HCT116 (cell line): ENCODE measurements at regions of chrX and their contacts with region 1.

Region 1: GRCh38 chrX:55717521-55718497 is at the start of gene RRAGB:
- DNase-seq: peak; percentile 89
- ATAC-seq: peak; percentile 99
- H3K4me3 ChIP-seq: peak within 1 kb of the TSS; percentile 69 to 71
- H3K27ac ChIP-seq: peak within 1 kb of the TSS; percentile 73
- H3K4me1 ChIP-seq: peaks cover 0 to 4% of the 10 kb centered on the region in 2 experiments; a peak in 1 of 4 replicates
- H3K27me3 ChIP-seq: no peaks in the 10 kb centered on the region
- CTCF ChIP-seq: peak; percentile 66 to 82 (median 71); a peak in 5 of 6 replicates
- POLR2A ChIP-seq: peak; percentile 64
- RAD21 ChIP-seq: peak; percentile 40
- total RNA-seq, gene RRAGB: 9.2 TPM

Region 2: DNA sequence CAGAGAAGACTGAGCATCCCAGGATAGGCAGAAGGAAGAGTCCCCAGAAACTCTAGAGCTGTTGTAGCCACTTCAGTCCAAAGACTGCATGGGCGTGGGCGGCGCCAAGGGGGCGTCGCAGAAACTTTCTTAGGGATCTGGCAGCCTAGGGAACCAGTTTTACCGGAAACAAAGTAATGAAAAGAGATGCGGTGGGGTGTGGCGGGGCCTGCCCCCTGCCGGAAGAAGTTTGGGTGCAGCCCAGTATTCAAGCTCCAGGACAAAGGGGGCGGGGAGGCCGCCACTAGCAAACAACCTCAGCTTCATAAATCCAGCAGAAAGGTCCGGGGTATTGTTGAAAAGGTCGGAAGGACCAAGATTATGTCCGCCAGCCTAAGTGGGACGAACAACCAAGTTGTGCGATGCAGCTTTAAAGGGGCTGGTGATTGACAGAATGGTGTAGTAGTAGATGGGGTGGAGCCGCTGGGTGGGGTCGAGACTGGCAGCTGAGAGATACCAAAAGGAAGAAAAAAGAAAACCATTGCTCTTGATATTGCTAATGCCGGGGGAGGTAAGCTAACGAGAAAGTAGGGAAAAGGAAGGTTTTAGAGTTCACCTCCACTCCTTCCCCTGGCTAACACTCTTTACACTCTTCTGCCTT is 190.3 kb after region 1 on chrX:
- CTCF ChIA-PET with region 1: interaction called, 7 read pairs
- POLR2A ChIA-PET with region 1: interaction called, 4 read pairs
- RAD21 ChIA-PET with region 1: no interaction called
- intact Hi-C with region 1: loop called (anchors 5 kb)
- DNase-seq: peak; percentile 38
- ATAC-seq: peak; percentile 81
- H3K4me3 ChIP-seq: peak overlapping the region; percentile 62 to 69
- H3K27ac ChIP-seq: peak overlapping the region; percentile 73
- H3K4me1 ChIP-seq: peaks cover 4 to 16% of the 10 kb centered on the region in 2 experiments
- H3K27me3 ChIP-seq: no peaks in the 10 kb centered on the region
- CTCF ChIP-seq: peak in 2 of 3 experiments; percentile 49 to 50; a peak in 4 of 6 replicates
- POLR2A ChIP-seq: no peak
- RAD21 ChIP-seq: peak; percentile 51

Region 3: DNA sequence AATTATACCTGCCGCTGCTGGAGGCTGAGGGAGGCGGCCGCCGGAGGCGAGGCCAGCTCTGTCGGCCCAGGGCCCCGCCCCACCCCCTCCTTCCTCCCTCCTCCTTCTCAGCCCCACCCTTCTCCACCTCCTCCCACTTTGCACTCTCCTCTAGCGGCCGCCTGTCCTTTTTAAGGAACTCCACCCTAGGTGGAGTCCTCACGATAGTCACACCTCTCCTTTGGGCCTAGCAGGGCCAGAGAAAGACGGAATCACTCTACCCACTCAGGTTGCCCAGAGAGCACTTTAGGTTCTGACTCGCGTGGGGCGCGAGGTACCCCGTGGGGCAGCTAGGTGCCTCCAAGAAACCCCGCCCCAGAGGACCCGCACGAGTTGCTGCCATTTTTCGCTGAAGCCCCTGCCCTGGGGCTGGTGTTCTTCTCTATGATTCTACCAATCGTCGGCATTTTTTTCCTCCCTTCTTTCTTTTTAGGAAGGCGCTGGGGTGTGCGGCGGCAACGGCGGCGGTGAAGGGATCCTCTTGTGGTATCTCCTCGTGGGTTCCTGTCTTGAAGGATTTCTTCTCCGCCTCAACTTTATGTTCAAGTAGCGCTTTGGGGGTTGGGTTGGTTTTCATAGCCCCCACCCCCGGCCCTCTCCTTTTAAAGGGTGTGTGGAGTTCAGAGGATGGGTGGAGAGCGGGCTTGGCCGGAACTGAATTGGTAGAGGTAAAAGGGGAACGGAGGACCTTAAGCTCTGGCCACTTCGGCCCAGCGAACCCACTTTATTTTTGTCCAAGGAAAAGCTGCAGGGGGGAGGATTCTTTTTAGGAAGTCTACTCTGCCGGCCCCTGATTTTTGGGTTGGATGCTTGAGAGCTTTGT is 514.6 kb after region 1 on chrX and contains the start of gene KLF8:
- CTCF ChIA-PET with region 1: no interaction called
- POLR2A ChIA-PET with region 1: interaction called, 3 read pairs
- RAD21 ChIA-PET with region 1: no interaction called
- intact Hi-C with region 1: loop called (anchors 5 kb)
- DNase-seq: peak; percentile 8
- ATAC-seq: peak; percentile 86
- H3K4me3 ChIP-seq: no peak within 1 kb of the TSS
- H3K27ac ChIP-seq: no peak within 1 kb of the TSS
- H3K4me1 ChIP-seq: peaks cover 4 to 18% of the 10 kb centered on the region in 2 experiments
- H3K27me3 ChIP-seq: no peaks in the 10 kb centered on the region
- CTCF ChIP-seq: no peak
- POLR2A ChIP-seq: no peak
- RAD21 ChIP-seq: no peak
- total RNA-seq, gene KLF8: 1.2 TPM